A673 (cell line): ENCODE measurements at regions of chr17 and their contacts with region 1.

Region 1: GRCh38 chr17:76239538-76240274 is 587 bp downstream of the RNF157 start:
- DNase-seq: no peak
- H3K4me3 ChIP-seq: peak overlapping the region; percentile 28
- H3K27ac ChIP-seq: no peak overlapping the region
- H3K4me1 ChIP-seq: peaks cover 4% of the 10 kb centered on the region
- H3K27me3 ChIP-seq: peaks cover 64% of the 10 kb centered on the region
- CTCF ChIP-seq: no peak

Region 2: GRCh38 chr17:75970626-75971025 is 269.1 kb before region 1 on chr17:
- CTCF ChIA-PET with region 1: interaction called, 10 read pairs
- POLR2A ChIA-PET with region 1: no interaction called
- intact Hi-C with region 1: no loop called
- DNase-seq: no peak
- H3K4me3 ChIP-seq: no peak overlapping the region
- H3K27ac ChIP-seq: no peak overlapping the region
- H3K4me1 ChIP-seq: no peaks in the 10 kb centered on the region
- H3K27me3 ChIP-seq: no peaks in the 10 kb centered on the region
- CTCF ChIP-seq: no peak

Region 3: DNA sequence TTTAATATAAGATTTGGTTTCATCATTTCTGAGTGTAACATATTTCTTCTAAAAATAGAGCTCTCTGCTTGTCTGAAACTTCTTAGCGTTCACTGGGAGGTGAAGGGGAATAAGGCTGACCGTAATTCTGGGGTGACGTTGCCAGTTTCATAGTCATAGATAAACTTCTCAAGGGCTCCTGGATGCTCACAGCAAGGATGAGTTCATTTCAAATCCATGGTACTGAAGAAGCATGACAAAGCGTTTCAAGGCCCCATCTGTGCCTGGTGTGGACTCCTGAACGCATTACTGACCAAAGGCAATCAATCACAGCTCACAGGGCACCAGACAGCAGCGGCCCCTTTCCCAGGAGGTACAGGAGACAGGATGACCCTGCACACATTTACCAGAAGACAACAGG is 200.6 kb before region 1 on chr17:
- CTCF ChIA-PET with region 1: no interaction called
- POLR2A ChIA-PET with region 1: no interaction called
- intact Hi-C with region 1: no loop called
- DNase-seq: no peak
- H3K4me3 ChIP-seq: no peak overlapping the region
- H3K27ac ChIP-seq: no peak overlapping the region
- H3K4me1 ChIP-seq: peaks cover 5% of the 10 kb centered on the region
- H3K27me3 ChIP-seq: no peaks in the 10 kb centered on the region
- CTCF ChIP-seq: no peak

Region 4: GRCh38 chr17:76191896-76192295 is 47.8 kb before region 1 on chr17:
- CTCF ChIA-PET with region 1: no interaction called
- POLR2A ChIA-PET with region 1: no interaction called
- intact Hi-C with region 1: no loop called
- DNase-seq: no peak
- H3K4me3 ChIP-seq: no peak overlapping the region
- H3K27ac ChIP-seq: no peak overlapping the region
- H3K4me1 ChIP-seq: no peaks in the 10 kb centered on the region
- H3K27me3 ChIP-seq: no peaks in the 10 kb centered on the region
- CTCF ChIP-seq: no peak

Region 5: GRCh38 chr17:77681861-77682260 is 1442.2 kb after region 1 on chr17:
- CTCF ChIA-PET with region 1: no interaction called
- POLR2A ChIA-PET with region 1: no interaction called
- intact Hi-C with region 1: no loop called
- DNase-seq: no peak
- H3K4me3 ChIP-seq: no peak overlapping the region
- H3K27ac ChIP-seq: no peak overlapping the region
- H3K4me1 ChIP-seq: peaks cover 8% of the 10 kb centered on the region
- H3K27me3 ChIP-seq: no peaks in the 10 kb centered on the region
- CTCF ChIP-seq: no peak